ENCODE measurements at regions of chr1 and their contacts with region 1.

Region 1: GRCh38 chr1:166902271-166902670 is 26.2 kb upstream of the TADA1 start:
- DNase-seq: no peak
- H3K4me3 Mint-ChIP-seq: no peak overlapping the region
- H3K27ac Mint-ChIP-seq: no peak overlapping the region
- H3K4me1 Mint-ChIP-seq: peaks cover 29% of the 10 kb centered on the region
- H3K27me3 Mint-ChIP-seq: peaks cover 12% of the 10 kb centered on the region

Region 2: GRCh38 chr1:166827426-166827825 is 74.8 kb before region 1 on chr1:
- intact Hi-C with region 1: no loop called
- DNase-seq: no peak
- H3K4me3 Mint-ChIP-seq: no peak overlapping the region
- H3K27ac Mint-ChIP-seq: no peak overlapping the region
- H3K4me1 Mint-ChIP-seq: no peaks in the 10 kb centered on the region
- H3K27me3 Mint-ChIP-seq: peaks cover 8% of the 10 kb centered on the region

Region 3: DNA sequence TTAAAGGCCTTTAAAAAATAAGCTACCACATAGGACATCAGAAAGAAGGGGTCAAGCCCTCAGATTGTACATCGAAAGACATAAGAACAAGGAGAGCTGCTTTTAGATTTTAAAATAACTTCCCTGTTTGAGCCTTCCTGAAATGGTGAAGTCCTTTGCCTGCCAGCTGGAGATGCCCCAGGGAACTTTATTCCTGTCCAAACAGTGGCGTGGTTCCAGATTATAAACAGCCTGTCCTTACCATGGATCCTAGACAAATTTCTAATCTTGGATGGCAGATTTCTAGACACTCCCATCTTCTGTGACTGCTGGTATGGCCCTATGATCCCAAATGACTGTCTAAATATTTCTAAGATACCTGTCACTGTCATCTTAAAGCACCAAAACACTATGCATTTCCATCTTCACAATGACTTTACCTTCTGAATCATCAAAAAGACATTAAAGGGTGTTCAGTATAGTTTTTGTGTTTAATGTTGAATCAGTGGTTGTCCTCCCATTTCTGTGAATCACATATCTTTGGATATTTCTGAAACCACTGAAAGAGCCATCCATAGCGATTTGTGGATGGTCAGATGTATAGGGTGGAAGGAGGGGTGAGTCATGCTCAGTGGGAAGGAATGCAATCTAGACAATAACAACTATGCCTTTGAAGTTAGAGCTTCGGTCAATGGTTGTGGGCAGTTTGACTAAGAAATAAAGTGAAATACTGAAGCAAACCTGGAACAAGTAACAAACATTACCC is 49.9 kb after region 1 on chr1:
- intact Hi-C with region 1: loop called (anchors 1 kb)
- DNase-seq: no peak
- H3K4me3 Mint-ChIP-seq: no peak overlapping the region
- H3K27ac Mint-ChIP-seq: peak overlapping the region; percentile 13
- H3K4me1 Mint-ChIP-seq: peaks cover 19% of the 10 kb centered on the region
- H3K27me3 Mint-ChIP-seq: peaks cover 21% of the 10 kb centered on the region

Measured in activated T-helper 1 cell treated with anti-CD3 and anti-CD28 coated beads, Interleukin-12 subunit alpha, Interleukin-12 subunit beta, Interleukin-2, Interleukin-4 antibody, amounts not matched to agents 30 ng/mL and 10 ng/mL and 1 ng/mL, durations not matched to agents 14 hours and 24 hours and 36 hours (primary cell).